ENCODE measurements at regions of chr11 and their contacts with region 1.

Region 1: DNA sequence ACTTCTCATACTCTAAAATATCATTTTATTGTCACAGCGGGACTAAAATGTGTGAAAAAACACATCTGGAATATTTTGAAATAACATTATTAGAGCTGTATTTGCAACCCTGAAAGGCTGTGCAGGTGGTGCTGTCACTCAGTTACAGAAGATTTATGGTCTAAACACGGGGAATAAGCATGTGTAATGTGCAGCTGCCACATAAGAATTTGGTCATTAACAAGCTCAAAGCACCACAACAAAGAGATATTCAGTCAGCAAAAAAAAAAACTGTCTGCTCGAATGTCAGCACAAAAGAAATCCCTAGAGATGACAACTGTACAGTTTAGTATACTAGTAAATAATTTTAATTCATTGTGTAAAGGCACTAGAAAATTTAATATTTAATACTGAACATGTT is 31.3 kb downstream of the TMEM123 start:
- DNase-seq: peak in 2 of 9 experiments; percentile 39 to 64
- ATAC-seq: peak; percentile 66
- H3K4me3 ChIP-seq: no peak overlapping the region
- H3K4me3 Mint-ChIP-seq: no peak overlapping the region
- H3K27ac ChIP-seq: no peak overlapping the region
- H3K27ac Mint-ChIP-seq: peak overlapping the region; percentile 65
- H3K4me1 ChIP-seq: peaks cover 91% of the 10 kb centered on the region
- H3K4me1 Mint-ChIP-seq: peaks cover 97% of the 10 kb centered on the region
- H3K27me3 ChIP-seq: no peaks in the 10 kb centered on the region
- H3K27me3 Mint-ChIP-seq: no peaks in the 10 kb centered on the region
- CTCF ChIP-seq: no peak

Region 2: DNA sequence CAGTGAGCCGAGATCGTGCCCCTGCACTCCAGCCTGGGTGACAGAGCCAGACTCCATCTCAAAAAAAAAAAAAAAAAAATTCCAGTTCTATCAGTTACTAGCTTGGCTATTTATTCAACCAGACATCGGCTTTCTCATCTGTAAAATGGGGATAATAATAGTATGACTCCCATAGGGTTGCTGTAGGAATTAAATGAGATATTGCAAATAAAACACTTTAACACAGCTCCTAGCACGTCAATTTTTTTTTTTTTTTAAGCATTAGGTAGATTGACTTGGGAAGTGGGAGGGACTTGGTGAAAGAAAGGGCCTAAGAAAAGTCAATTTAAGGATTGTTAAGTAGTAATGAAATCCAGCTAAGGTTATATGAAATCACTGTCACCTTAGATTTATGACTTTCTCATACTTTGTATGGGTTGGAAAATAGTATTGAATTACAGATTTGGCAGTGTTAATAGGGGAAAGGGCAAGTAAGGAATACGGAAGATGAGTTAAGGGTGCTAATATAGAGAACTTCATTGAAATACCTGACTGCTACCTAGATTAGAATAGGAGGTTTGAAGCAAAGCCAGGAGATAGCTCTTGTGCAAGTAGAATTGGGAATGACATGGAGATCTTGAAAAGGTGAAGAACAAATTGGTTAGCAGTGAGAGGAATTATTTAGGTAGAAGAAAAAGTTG is 45.4 kb before region 1 on chr11:
- CTCF ChIA-PET with region 1: no interaction called
- POLR2A ChIA-PET with region 1: no interaction called
- intact Hi-C with region 1: loop called in 1 of 2 experiments (anchors 5 kb)
- DNase-seq: no peak
- ATAC-seq: no peak
- H3K4me3 ChIP-seq: no peak overlapping the region
- H3K4me3 Mint-ChIP-seq: no peak overlapping the region
- H3K27ac ChIP-seq: no peak overlapping the region
- H3K27ac Mint-ChIP-seq: peak overlapping the region; percentile 28
- H3K4me1 ChIP-seq: peaks cover 8% of the 10 kb centered on the region
- H3K4me1 Mint-ChIP-seq: peaks cover 33% of the 10 kb centered on the region
- H3K27me3 ChIP-seq: no peaks in the 10 kb centered on the region
- H3K27me3 Mint-ChIP-seq: no peaks in the 10 kb centered on the region
- CTCF ChIP-seq: no peak

Region 3: GRCh38 chr11:102396708-102397563 is 24.3 kb before region 1 on chr11:
- CTCF ChIA-PET with region 1: interaction called, 4 read pairs
- POLR2A ChIA-PET with region 1: interaction called, 3 read pairs
- intact Hi-C with region 1: loop called in 1 of 2 experiments (anchors 2 kb)
- DNase-seq: no peak
- ATAC-seq: no peak
- H3K4me3 ChIP-seq: no peak overlapping the region
- H3K4me3 Mint-ChIP-seq: peak overlapping the region; percentile 27
- H3K27ac ChIP-seq: no peak overlapping the region
- H3K27ac Mint-ChIP-seq: peak overlapping the region; percentile 83
- H3K4me1 ChIP-seq: peaks cover 28% of the 10 kb centered on the region
- H3K4me1 Mint-ChIP-seq: peaks cover 58% of the 10 kb centered on the region
- H3K27me3 ChIP-seq: no peaks in the 10 kb centered on the region
- H3K27me3 Mint-ChIP-seq: no peaks in the 10 kb centered on the region
- CTCF ChIP-seq: no peak

Region 4: GRCh38 chr11:102410382-102410784 is 10.9 kb before region 1 on chr11:
- CTCF ChIA-PET with region 1: interaction called, 6 read pairs
- POLR2A ChIA-PET with region 1: interaction called, 3 read pairs
- intact Hi-C with region 1: loop called in 1 of 2 experiments (anchors 1 kb)
- DNase-seq: no peak
- ATAC-seq: no peak
- H3K4me3 ChIP-seq: no peak overlapping the region
- H3K4me3 Mint-ChIP-seq: peak overlapping the region; percentile 6
- H3K27ac ChIP-seq: no peak overlapping the region
- H3K27ac Mint-ChIP-seq: peak overlapping the region; percentile 69
- H3K4me1 ChIP-seq: peaks cover 78% of the 10 kb centered on the region
- H3K4me1 Mint-ChIP-seq: peaks cover 91% of the 10 kb centered on the region
- H3K27me3 ChIP-seq: no peaks in the 10 kb centered on the region
- H3K27me3 Mint-ChIP-seq: no peaks in the 10 kb centered on the region
- CTCF ChIP-seq: no peak